Heart right ventricle (tissue), 16 donors: ENCODE measurements at regions of chr14 and their contacts with region 1.

Region 1: DNA sequence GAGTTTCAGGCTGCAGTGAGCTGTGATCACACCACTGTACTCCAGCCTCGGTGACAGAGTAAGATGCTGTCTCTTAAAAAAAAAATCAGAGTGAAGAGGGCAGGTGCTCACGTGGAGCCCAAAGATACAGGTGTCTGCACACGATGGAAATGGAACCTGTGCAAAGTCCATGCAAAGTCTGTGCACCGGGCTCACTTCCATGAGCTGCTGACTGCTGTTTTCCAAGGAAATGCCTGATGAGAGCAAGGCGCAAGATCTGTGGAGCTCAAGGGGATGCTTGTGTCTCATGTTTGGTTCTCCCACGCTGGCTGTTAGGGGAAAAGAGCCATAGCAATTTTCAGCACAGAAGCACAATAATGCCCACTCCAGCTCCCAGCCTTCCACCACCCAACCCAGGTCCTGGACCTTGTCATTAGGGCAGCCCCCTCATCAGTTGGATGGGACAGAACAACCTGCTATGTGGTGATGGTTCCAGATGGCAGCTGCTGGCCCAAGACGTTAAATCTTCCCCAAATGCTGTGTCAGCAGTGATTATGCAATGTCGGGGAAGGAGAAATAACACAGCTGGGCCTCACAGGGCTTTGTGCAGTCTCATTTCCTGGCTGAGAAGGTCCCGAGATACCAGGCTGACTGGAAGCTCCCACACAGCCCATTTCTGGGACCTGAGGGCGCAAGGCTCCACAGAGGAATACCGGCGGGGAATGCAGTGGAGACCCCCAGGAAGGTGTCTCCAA is 27.9 kb upstream of the DICER1 start:
- DNase-seq: peak; percentile 41 to 74
- ATAC-seq: peak; percentile 77 to 90 (median 81)
- H3K4me3 ChIP-seq: peak overlapping the region in 4 of 10 donors; percentile 2 to 44 (median 13)
- H3K27ac ChIP-seq: peak overlapping the region; percentile 66 to 93 (median 86)
- H3K4me1 ChIP-seq: peaks cover 20 to 81% (median 59%) of the 10 kb centered on the region in 9 donors
- H3K27me3 ChIP-seq: peaks cover 0 to 10% (median 3%) of the 10 kb centered on the region in 7 donors
- CTCF ChIP-seq: no peak

Region 2: GRCh38 chr14:95140060-95140858 is 44.9 kb before region 1 on chr14:
- intact Hi-C with region 1: loop called in 2 of 10 experiments (anchors 5 kb)
- DNase-seq: no peak
- ATAC-seq: peak in 1 of 8 donors; percentile 22
- H3K4me3 ChIP-seq: no peak overlapping the region
- H3K27ac ChIP-seq: peak overlapping the region in 2 of 10 donors; percentile 22 to 87
- H3K4me1 ChIP-seq: peaks cover 5 to 85% (median 67%) of the 10 kb centered on the region in 9 donors
- H3K27me3 ChIP-seq: no peaks in the 10 kb centered on the region
- CTCF ChIP-seq: no peak

Region 3: GRCh38 chr14:95157327-95158189 is 27.6 kb before region 1 on chr14 and contains the start of gene DICER1:
- intact Hi-C with region 1: loop called in 2 of 10 experiments (anchors 2 to 5 kb)
- DNase-seq: peak; percentile 98 to 99
- ATAC-seq: peak; percentile 96 to 98 (median 98)
- H3K4me3 ChIP-seq: peak within 1 kb of the TSS; percentile 39 to 93 (median 86)
- H3K27ac ChIP-seq: peak within 1 kb of the TSS; percentile 82 to 96 (median 94)
- H3K4me1 ChIP-seq: peaks cover 4 to 50% (median 37%) of the 10 kb centered on the region in 9 donors
- H3K27me3 ChIP-seq: no peaks in the 10 kb centered on the region
- CTCF ChIP-seq: no peak
- total RNA-seq, gene DICER1: 19.8 to 38.8 (median 27.5) TPM

Region 4: DNA sequence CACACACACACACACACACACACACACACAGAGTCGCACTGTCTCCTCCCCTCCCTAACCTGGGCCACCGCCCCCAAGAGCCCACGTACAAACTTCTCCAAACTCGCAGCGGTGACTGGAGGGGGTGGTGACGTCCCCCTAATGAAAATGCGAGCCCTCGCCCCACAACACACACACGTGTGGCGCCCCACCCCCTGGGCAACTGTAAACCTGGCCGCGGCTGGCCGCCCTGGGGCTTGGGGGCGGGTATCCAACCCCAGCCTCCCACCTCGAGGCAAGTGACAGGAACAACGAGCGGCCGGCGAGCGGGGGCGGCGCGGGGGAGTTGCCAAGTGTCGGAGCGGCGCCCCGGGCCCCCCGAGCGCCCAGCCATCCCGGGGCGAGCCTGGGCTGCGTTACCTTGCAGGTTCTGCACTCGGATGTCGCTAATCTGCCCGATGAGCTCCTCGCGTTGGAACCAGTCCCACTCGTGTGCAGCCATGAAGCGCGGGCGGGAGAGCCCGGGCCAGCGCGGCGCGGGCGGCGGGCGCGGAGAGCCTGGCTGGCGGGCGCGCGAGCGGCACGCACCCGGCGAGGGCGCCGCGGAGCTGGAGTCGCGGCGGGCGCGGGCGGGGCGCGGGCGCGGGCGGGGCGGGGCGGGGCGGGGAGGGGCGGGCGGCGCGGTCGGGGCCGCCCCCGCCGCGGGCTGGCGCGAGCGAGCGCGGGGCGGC is 134.3 kb after region 1 on chr14 and contains the start of gene CLMN:
- intact Hi-C with region 1: loop called in 1 of 10 experiments (anchors 10 kb)
- DNase-seq: peak; percentile 21 to 44
- ATAC-seq: peak; percentile 30 to 78 (median 44)
- H3K4me3 ChIP-seq: peak within 1 kb of the TSS; percentile 77 to 96 (median 89)
- H3K27ac ChIP-seq: peak within 1 kb of the TSS; percentile 73 to 88 (median 83)
- H3K4me1 ChIP-seq: peaks cover 0 to 52% (median 19%) of the 10 kb centered on the region in 9 donors
- H3K27me3 ChIP-seq: peaks cover 0 to 13% (median 0%) of the 10 kb centered on the region in 7 donors
- CTCF ChIP-seq: no peak
- total RNA-seq, gene CLMN: 3.7 to 14.5 (median 5.9) TPM

Region 5: GRCh38 chr14:95431199-95432143 is 246.3 kb after region 1 on chr14:
- intact Hi-C with region 1: loop called in 1 of 10 experiments (anchors 10 kb)
- DNase-seq: no peak
- ATAC-seq: peak; percentile 47 to 84 (median 60)
- H3K4me3 ChIP-seq: no peak overlapping the region
- H3K27ac ChIP-seq: peak overlapping the region in 6 of 10 donors; percentile 8 to 58 (median 37)
- H3K4me1 ChIP-seq: peaks cover 0 to 14% (median 5%) of the 10 kb centered on the region in 9 donors
- H3K27me3 ChIP-seq: no peaks in the 10 kb centered on the region
- CTCF ChIP-seq: peak; percentile 28 to 68 (median 55)